ENCODE measurements at regions of chr14 and their contacts with region 1.

Region 1: DNA sequence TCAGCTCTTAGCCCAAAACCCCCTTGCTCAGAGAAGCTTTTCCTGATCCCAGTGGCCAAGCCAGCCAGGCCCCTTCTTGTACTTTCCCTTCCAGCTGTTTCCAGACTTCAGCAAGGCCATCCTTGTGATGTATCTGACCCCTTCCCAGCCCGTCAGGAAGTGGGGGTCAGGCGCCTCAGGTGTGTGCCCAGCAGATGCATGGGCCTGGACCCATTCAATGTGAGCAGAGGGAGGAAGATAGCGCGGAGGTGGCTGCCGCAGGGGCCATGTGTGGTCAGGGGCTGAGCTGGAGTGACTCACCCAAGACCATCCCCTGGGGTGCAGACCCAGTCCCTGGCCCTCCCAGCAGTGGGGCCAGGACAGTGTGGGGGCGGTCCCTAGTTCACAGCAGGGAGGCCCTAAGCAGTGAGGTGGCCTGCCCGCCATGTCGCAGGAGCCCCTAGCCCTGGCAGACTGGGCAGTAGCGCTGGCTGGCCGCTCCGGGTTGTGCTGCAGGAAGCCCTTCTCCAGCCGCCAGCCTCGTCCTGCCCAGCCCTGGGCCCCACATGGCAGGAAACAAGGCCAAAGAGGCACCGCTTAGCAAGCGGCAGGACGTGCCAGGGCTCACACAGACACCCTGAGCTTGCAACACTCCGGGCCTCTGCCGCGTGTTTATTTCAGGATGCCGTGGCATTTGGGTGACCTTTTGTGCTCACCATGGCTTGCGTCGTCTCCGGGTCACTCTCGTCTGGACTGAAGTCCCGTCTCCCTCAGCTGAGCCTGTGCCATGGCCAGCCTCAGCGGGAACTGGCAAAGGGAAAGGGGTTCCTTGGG is 12.0 kb downstream of the ADSS1 start:
- DNase-seq: no peak
- H3K4me3 ChIP-seq: no peak overlapping the region
- H3K27ac ChIP-seq: no peak overlapping the region
- H3K4me1 ChIP-seq: no peaks in the 10 kb centered on the region; a peak in 2 of 7 replicates
- H3K27me3 ChIP-seq: peaks cover 0 to 5% (median 0%) of the 10 kb centered on the region in 4 experiments; a peak in 2 of 7 replicates
- CTCF ChIP-seq: no peak
- EP300 ChIP-seq: no peak
- POLR2A ChIP-seq: no peak
- RAD21 ChIP-seq: no peak

Region 2: DNA sequence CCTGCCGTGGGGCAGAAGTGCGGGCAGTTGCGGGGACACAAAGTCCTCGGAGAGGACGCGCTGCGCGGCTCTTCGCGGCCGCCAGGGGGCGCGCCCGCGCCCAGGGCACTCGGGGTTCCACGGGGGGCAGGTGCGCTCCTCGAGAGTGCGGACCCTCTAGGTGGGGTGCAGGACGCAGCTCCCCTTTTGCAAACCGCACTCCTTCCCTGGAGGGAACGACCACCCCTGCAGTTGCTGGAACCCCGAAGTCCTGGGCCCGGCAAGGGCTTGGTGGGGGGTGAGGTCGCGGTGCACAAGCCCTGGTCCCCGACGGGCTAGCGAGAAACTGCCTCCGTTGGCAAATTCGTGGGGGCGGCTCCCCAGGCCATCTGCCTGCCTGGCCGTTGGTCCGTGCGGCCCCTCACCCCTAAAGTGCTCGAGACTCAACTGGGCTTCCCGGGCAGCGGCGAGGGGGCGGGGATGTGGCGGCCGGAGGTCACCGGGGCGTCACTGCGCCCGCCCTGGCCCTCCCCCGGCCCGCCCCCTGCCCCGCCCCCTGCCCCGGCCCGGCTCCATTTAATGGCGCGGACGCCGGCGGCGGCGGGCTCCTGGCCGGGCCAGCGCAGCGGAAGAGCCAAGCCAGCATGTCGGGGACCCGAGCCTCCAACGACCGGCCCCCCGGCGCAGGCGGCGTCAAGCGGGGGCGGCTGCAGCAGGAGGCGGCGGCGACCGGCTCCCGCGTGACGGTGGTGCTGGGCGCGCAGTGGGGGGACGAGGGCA is 12.2 kb before region 1 on chr14 and contains the start of gene ADSS1:
- CTCF ChIA-PET with region 1: interaction called, 18 read pairs
- POLR2A ChIA-PET with region 1: interaction called, 4 read pairs
- DNase-seq: peak in 1 of 2 experiments; percentile 84
- H3K4me3 ChIP-seq: peak within 1 kb of the TSS; percentile 55 to 88 (median 68)
- H3K27ac ChIP-seq: no peak within 1 kb of the TSS; the same call in 1 of the 2 replicates
- H3K4me1 ChIP-seq: peaks cover 0 to 18% (median 10%) of the 10 kb centered on the region in 4 experiments; a peak in 6 of 7 replicates
- H3K27me3 ChIP-seq: peaks cover 0 to 3% (median 0%) of the 10 kb centered on the region in 4 experiments; a peak in 1 of 7 replicates
- CTCF ChIP-seq: peak in 2 of 3 experiments; percentile 82 to 84; a peak in 3 of 4 replicates
- EP300 ChIP-seq: no peak
- POLR2A ChIP-seq: 0 out of 3 replicates have a peak, but pooled peaks of 1 of the 2 experiments have one; percentile 58
- RAD21 ChIP-seq: peak; percentile 8 to 42; a peak in 1 of 4 replicates
- total RNA-seq, gene ADSS1: 7.9 and 8.9 TPM in 2 replicates

Region 3: GRCh38 chr14:104752735-104753531 is 16.9 kb after region 1 on chr14 and contains the start of gene SIVA1:
- CTCF ChIA-PET with region 1: interaction called, 11 read pairs
- POLR2A ChIA-PET with region 1: interaction called, 11 read pairs
- DNase-seq: peak; percentile 95 to 100
- H3K4me3 ChIP-seq: peak within 1 kb of the TSS; percentile 86 to 97 (median 94)
- H3K27ac ChIP-seq: peak within 1 kb of the TSS; percentile 85
- H3K4me1 ChIP-seq: peaks cover 0 to 13% (median 5%) of the 10 kb centered on the region in 4 experiments; a peak in 6 of 7 replicates
- H3K27me3 ChIP-seq: no peaks in the 10 kb centered on the region; a peak in 1 of 7 replicates
- CTCF ChIP-seq: no peak
- EP300 ChIP-seq: no peak
- POLR2A ChIP-seq: peak in 1 of 2 experiments; percentile 91; a peak in 2 of 3 replicates
- RAD21 ChIP-seq: no peak
- total RNA-seq, gene SIVA1: 123 and 135 TPM in 2 replicates